ENCODE measurements at regions of chr2 and their contacts with region 1.

Region 1: DNA sequence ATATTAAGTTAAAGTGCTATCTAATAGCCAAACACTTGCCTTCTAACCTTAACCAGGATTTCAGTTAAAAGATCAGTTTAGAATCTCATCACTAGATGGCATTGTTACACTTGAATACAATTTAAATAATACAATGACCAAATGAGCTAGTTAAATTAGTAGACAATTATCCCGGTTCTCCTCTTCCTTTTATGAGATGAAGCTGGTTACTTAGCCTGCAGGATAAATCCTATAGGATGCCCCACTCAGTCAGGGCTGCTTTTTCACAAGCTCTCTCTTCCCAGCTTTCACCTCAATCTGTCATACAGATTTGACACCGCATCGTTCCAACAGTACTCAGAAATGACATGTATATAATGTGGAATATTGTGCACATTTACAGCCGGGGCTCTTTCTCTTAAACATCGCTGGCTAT is 678.8 kb downstream of the KCNJ3 start:
- DNase-seq: peak; percentile 63
- ATAC-seq: peak; percentile 38; the same call in 1 of the 2 replicates
- H3K4me3 ChIP-seq: no peak overlapping the region
- H3K27ac ChIP-seq: no peak overlapping the region
- H3K4me1 ChIP-seq: no peaks in the 10 kb centered on the region
- H3K27me3 ChIP-seq: no peaks in the 10 kb centered on the region
- CTCF ChIP-seq: peak; percentile 68

Region 2: DNA sequence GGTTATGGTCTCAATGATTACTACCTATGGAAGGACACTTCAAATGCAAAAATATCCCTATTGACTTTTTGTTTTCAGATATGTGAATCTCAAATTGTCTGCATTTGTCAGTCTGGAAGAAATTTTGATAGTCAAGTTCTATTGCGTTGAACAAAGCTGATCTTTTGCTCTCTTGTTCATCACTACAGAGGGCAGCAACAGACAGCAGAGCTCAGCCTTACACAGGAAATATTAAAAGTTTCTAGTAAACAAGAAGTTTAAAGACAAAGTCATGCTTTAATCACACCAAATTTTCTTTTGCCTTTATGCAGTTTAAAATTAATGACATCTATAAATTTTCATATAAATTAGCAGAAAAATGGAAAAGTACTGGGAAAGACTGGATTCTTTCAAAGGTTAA is 337.7 kb after region 1 on chr2:
- CTCF ChIA-PET with region 1: no interaction called
- POLR2A ChIA-PET with region 1: no interaction called
- intact Hi-C with region 1: loop called (anchors 5 kb)
- DNase-seq: no peak
- ATAC-seq: peak; percentile 88
- H3K4me3 ChIP-seq: no peak overlapping the region
- H3K27ac ChIP-seq: no peak overlapping the region
- H3K4me1 ChIP-seq: no peaks in the 10 kb centered on the region
- H3K27me3 ChIP-seq: no peaks in the 10 kb centered on the region
- CTCF ChIP-seq: no peak

Region 3: GRCh38 chr2:156215655-156216054 is 838.4 kb after region 1 on chr2:
- CTCF ChIA-PET with region 1: no interaction called
- POLR2A ChIA-PET with region 1: no interaction called
- intact Hi-C with region 1: loop called (anchors 5 kb)
- DNase-seq: peak; percentile 38
- ATAC-seq: peak; percentile 55
- H3K4me3 ChIP-seq: no peak overlapping the region
- H3K27ac ChIP-seq: no peak overlapping the region
- H3K4me1 ChIP-seq: no peaks in the 10 kb centered on the region
- H3K27me3 ChIP-seq: no peaks in the 10 kb centered on the region
- CTCF ChIP-seq: peak; percentile 51

Region 4: DNA sequence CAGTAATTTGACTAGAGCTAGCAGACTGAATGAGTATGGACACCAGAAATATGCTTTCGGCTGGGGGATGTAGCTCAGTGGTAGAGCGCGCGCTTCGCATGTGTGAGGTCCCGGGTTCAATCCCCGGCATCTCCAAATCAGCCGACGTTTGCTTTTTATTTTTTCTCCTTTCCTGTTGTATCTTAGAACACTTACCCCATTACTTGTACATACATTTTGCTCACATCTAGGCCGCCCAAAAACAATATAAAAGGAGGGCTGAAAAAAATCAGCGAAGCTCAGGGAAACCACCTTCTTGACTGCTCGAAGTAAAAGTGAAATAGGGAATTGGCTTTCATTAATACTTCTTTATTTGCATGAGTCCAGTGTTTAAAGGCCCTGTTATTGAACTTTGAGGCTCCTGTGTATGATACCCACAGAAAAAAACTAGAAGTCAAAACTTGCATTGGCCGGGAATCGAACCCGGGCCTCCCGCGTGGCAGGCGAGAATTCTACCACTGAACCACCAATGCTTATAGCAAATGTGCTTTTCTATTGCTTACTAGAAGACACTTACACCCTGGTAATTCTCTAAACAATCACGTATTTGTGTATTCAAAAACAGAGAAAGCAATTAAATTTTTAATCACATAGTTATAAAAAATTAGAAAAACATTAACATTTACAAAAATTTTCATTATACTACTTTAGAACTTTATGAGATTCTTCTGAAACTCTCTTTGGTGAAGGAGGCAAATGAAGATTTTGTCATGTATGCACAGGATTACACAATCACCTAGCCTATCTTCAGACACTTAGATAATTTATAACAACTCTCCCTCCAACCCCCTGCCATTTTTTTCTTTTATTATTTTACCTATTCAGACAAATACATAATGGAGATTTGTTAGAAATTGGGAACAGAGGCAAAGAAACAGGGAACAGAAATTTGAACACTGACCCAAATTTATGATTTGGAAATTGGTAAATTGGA is 1023.7 kb after region 1 on chr2:
- CTCF ChIA-PET with region 1: no interaction called
- POLR2A ChIA-PET with region 1: no interaction called
- intact Hi-C with region 1: loop called (anchors 10 kb)
- DNase-seq: peak; percentile 83
- ATAC-seq: peak; percentile 73
- H3K4me3 ChIP-seq: peak overlapping the region; percentile 74
- H3K27ac ChIP-seq: peak overlapping the region; percentile 91
- H3K4me1 ChIP-seq: peaks cover 21% of the 10 kb centered on the region
- H3K27me3 ChIP-seq: no peaks in the 10 kb centered on the region
- CTCF ChIP-seq: no peak

Region 5: DNA sequence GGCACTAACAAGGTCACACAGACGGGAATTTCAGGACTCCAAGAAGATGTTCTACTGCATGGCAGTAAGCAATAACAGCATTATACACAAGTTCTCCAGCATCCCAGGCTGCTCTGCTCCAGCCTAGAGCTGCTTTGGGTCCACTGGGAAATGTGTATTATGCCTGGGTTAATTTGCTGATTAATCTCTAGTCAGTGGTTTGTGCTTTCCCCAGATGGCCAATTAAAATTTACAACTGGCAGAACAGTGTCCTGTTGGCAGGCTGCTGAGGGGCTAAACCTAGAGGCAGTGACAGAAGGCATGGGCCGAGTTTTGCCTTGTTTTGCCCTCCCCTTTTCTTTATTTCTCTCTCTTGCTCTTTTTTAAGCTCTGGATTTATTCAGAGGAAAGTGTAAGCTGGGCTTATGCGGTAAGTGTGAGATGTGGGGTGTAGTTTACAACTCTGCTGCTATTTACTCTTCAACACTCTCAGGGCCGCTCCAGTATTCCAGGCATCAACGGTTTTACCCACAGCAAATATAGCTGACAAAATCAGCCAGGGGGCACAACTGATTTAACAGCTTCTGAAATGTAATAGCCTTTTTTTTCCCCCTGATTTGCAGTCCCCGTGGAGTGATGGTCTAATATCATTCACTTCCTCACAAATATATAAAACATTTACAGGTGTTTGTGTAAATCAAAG is 1406.9 kb after region 1 on chr2:
- CTCF ChIA-PET with region 1: interaction called, 3 read pairs
- POLR2A ChIA-PET with region 1: no interaction called
- intact Hi-C with region 1: loop called (anchors 5 kb)
- DNase-seq: no peak
- ATAC-seq: peak; percentile 49
- H3K4me3 ChIP-seq: no peak overlapping the region
- H3K27ac ChIP-seq: no peak overlapping the region
- H3K4me1 ChIP-seq: peaks cover 38% of the 10 kb centered on the region
- H3K27me3 ChIP-seq: no peaks in the 10 kb centered on the region
- CTCF ChIP-seq: no peak

Region 6: DNA sequence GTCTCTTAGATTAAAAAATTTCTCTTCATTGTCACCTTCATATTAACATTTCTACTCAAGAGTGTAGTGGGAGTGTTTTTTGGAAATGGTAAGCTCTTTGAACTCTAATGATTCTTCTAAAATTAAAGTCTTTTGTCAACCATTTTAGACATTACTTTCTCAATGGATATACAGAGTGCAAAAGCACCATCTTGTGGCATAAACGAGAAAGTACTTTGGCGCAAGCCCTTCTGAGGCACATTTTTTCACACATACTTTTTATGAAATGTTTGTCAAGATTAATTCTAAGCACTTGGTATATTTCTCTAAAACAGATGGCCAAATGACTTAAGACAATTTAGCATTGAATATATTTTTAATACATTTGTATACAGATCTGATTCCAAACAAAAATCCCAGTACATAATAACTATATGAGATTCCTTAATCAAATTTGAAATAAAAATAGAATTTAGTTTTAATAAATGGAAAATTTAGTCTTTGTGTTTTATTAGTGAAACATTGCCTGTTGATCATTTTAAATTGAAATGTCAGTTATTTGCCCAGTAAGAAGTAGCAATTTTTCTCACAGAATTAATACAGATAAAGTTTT is 1816.9 kb after region 1 on chr2:
- CTCF ChIA-PET with region 1: no interaction called
- POLR2A ChIA-PET with region 1: no interaction called
- intact Hi-C with region 1: loop called (anchors 1 kb)
- DNase-seq: peak; percentile 79
- ATAC-seq: peak; percentile 45
- H3K4me3 ChIP-seq: no peak overlapping the region
- H3K27ac ChIP-seq: no peak overlapping the region
- H3K4me1 ChIP-seq: no peaks in the 10 kb centered on the region
- H3K27me3 ChIP-seq: no peaks in the 10 kb centered on the region
- CTCF ChIP-seq: peak; percentile 89